BJ (cell line): ENCODE measurements at regions of chr15 and their contacts with region 1.

Region 1: GRCh38 chr15:52124270-52124880 is 11.8 kb upstream of the BCL2L10 start:
- DNase-seq: no peak
- H3K4me3 ChIP-seq: no peak overlapping the region
- H3K27me3 ChIP-seq: no peaks in the 10 kb centered on the region
- CTCF ChIP-seq: no peak

Region 2: GRCh38 chr15:52139599-52140491 is 15.5 kb after region 1 on chr15:
- CTCF ChIA-PET with region 1: interaction called, 13 read pairs
- POLR2A ChIA-PET with region 1: interaction called, 7 read pairs
- DNase-seq: no peak
- H3K4me3 ChIP-seq: no peak overlapping the region
- H3K27me3 ChIP-seq: no peaks in the 10 kb centered on the region
- CTCF ChIP-seq: peak; percentile 84